Breast epithelium (tissue), 4 donors: ENCODE measurements at regions of chr20 and their contacts with region 1.

Region 1: GRCh38 chr20:59962155-59962554 is 3.9 kb downstream of the CDH26 start:
- DNase-seq: no peak
- H3K4me3 ChIP-seq: no peak overlapping the region
- H3K27ac ChIP-seq: no peak overlapping the region
- H3K4me1 ChIP-seq: no peaks in the 10 kb centered on the region
- H3K27me3 ChIP-seq: no peaks in the 10 kb centered on the region
- CTCF ChIP-seq: no peak
- POLR2A ChIP-seq: no peak

Region 2: GRCh38 chr20:59976156-59976782 is 14.1 kb after region 1 on chr20:
- intact Hi-C with region 1: loop called (anchors 2 kb)
- DNase-seq: no peak
- H3K4me3 ChIP-seq: no peak overlapping the region
- H3K27ac ChIP-seq: no peak overlapping the region
- H3K4me1 ChIP-seq: no peaks in the 10 kb centered on the region
- H3K27me3 ChIP-seq: no peaks in the 10 kb centered on the region
- CTCF ChIP-seq: no peak
- POLR2A ChIP-seq: no peak